Activated CD4-positive, alpha-beta memory T cell treated with anti-CD3 and anti-CD28 coated beads for 36 hours (primary cell): ENCODE measurements at regions of chr1 and their contacts with region 1.

Region 1: GRCh38 chr1:40668769-40669525 is 3.5 kb upstream of the RIMS3 start:
- DNase-seq: peak; percentile 91
- H3K4me3 Mint-ChIP-seq: peak overlapping the region; percentile 41
- H3K27ac Mint-ChIP-seq: no peak overlapping the region
- H3K4me1 Mint-ChIP-seq: peaks cover 7% of the 10 kb centered on the region
- H3K27me3 Mint-ChIP-seq: no peaks in the 10 kb centered on the region

Region 2: DNA sequence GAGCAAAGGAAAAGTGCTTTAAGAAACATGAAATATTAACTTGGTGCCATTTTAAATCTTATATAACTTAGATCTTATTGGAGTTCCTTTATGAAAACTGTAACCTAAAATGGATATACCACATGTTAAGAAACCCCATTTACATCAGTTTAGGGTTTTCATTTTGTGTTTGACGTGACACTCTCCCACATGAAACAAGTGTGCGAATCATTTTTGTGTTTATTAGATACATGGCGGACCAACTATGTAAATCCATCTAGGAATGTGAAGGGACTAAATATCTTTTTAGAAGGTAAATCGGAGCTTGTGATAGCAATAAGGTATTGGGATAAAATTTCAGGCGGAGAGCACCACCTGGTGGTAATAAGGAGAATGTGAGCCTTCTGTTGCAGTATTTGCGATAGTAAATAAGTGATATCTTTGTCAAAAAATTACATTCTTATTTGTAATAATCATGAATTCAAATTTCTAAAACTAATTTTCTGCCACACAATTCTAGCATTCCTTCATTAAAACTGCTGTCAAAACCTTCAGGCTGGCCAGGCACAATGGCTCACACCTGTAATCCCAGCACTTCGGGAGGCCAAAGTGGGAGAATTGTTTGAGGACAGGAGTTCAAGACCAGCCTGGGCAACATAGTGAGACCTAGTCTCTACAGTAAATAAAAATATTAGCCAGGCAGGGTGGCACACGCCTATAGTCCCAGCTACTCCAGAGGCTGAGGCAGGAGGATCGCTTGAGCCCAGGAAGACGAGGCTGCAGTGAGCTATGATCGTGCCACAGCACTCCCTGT is 264.1 kb before region 1 on chr1:
- CTCF ChIA-PET with region 1: no interaction called
- POLR2A ChIA-PET with region 1: no interaction called
- intact Hi-C with region 1: no loop called
- DNase-seq: peak; percentile 49
- H3K4me3 Mint-ChIP-seq: peak overlapping the region; percentile 52
- H3K27ac Mint-ChIP-seq: peak overlapping the region; percentile 88
- H3K4me1 Mint-ChIP-seq: peaks cover 72% of the 10 kb centered on the region
- H3K27me3 Mint-ChIP-seq: no peaks in the 10 kb centered on the region

Region 3: DNA sequence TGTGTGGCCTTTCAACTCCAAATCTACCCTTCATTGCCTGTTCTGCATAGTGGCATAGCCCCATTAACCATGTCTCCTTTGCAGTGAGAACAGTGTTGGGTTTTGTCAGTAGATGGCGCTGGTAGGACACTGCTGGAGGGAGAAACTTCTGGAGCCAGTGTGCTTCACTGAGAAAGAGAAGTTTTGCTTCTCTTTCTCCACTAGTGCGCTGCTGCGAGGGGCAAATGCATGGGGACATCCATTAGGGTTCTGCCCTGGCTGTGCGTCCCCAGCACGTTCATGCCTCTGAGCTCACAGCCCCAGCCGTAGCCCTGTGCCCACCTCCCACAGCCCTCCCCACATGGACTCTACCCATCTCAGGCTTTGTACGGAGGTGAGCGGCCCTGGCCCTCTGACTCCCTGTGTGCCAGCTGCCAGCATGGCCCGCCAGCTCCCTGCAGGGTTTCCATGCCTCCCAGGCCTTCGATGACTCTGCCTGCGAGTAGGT is 56.6 kb before region 1 on chr1:
- CTCF ChIA-PET with region 1: interaction called, 6 read pairs
- POLR2A ChIA-PET with region 1: no interaction called
- intact Hi-C with region 1: loop called (anchors 1 kb)
- DNase-seq: peak; percentile 79
- H3K4me3 Mint-ChIP-seq: no peak overlapping the region
- H3K27ac Mint-ChIP-seq: no peak overlapping the region
- H3K4me1 Mint-ChIP-seq: no peaks in the 10 kb centered on the region
- H3K27me3 Mint-ChIP-seq: no peaks in the 10 kb centered on the region

Region 4: GRCh38 chr1:40625066-40625465 is 43.9 kb before region 1 on chr1:
- CTCF ChIA-PET with region 1: interaction called, 5 read pairs
- POLR2A ChIA-PET with region 1: no interaction called
- intact Hi-C with region 1: loop called (anchors 2 kb)
- DNase-seq: peak; percentile 45
- H3K4me3 Mint-ChIP-seq: no peak overlapping the region
- H3K27ac Mint-ChIP-seq: no peak overlapping the region
- H3K4me1 Mint-ChIP-seq: peaks cover 18% of the 10 kb centered on the region
- H3K27me3 Mint-ChIP-seq: no peaks in the 10 kb centered on the region

Region 5: DNA sequence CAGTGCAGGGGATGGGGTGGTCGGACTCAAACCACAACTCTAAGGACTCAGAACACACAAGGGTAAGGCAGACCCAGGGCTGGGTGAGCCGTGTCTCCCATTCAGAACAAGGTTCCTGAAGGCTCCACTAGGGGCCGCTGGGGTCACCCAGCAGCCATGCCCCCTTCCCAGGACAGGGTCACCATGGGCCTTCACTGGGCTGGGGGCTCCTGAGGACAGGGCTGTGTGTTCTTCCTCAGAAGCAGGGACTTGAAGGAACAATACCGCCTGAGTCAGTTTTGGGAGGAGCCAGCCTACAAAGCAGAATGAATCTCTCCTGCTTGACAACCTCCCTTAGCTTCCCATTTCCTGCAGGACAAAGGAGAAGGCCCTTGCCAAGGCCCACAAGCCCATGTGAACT is 18.9 kb before region 1 on chr1:
- CTCF ChIA-PET with region 1: no interaction called
- POLR2A ChIA-PET with region 1: no interaction called
- intact Hi-C with region 1: no loop called
- DNase-seq: no peak
- H3K4me3 Mint-ChIP-seq: no peak overlapping the region
- H3K27ac Mint-ChIP-seq: no peak overlapping the region
- H3K4me1 Mint-ChIP-seq: no peaks in the 10 kb centered on the region
- H3K27me3 Mint-ChIP-seq: peaks cover 2% of the 10 kb centered on the region

Region 6: DNA sequence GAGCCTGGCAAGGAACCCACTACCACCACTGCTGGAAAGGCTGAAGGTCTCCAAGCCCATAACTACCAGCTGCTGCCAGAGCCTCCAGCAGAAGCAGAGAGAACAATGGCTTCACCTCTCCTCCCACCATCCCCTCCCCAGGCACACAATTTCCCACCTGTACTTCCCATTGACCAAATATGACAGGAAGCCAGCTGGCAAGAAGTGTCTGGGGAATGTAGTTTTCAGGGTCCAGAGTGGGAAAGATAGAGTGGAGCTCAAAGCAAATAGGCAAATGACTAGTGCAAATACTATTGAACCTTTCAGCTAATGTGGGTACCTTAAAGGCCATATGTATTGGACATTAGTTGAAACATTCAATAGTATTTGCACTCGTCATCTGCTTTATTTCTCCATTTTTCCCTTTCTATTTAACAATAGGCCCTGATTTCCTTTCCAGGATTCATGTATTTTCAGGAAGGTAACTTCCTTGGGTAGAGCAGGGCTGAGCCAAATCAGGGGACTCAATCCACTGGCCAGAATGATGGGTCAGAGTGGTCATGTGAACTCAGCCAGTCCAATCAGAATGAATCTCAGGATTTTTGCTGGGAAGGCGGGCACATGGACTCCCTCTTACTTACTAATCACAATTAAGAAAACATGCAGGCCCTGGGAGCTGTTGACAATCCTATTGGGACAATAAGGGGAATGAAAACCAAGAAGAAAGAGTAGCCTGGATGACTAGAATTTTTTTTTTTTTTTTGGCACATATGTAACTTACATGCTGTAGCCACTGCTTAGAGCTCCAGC is 10.4 kb after region 1 on chr1:
- CTCF ChIA-PET with region 1: interaction called, 15 read pairs
- POLR2A ChIA-PET with region 1: no interaction called
- intact Hi-C with region 1: no loop called
- DNase-seq: no peak
- H3K4me3 Mint-ChIP-seq: no peak overlapping the region
- H3K27ac Mint-ChIP-seq: no peak overlapping the region
- H3K4me1 Mint-ChIP-seq: no peaks in the 10 kb centered on the region
- H3K27me3 Mint-ChIP-seq: peaks cover 2% of the 10 kb centered on the region

Region 7: GRCh38 chr1:40840526-40841323 is 171.8 kb after region 1 on chr1:
- CTCF ChIA-PET with region 1: no interaction called
- POLR2A ChIA-PET with region 1: no interaction called
- intact Hi-C with region 1: no loop called
- DNase-seq: no peak
- H3K4me3 Mint-ChIP-seq: no peak overlapping the region
- H3K27ac Mint-ChIP-seq: no peak overlapping the region
- H3K4me1 Mint-ChIP-seq: peaks cover 15% of the 10 kb centered on the region
- H3K27me3 Mint-ChIP-seq: no peaks in the 10 kb centered on the region

Region 8: GRCh38 chr1:40939320-40940059 is 270.5 kb after region 1 on chr1:
- CTCF ChIA-PET with region 1: no interaction called
- POLR2A ChIA-PET with region 1: no interaction called
- intact Hi-C with region 1: no loop called
- DNase-seq: no peak
- H3K4me3 Mint-ChIP-seq: no peak overlapping the region
- H3K27ac Mint-ChIP-seq: no peak overlapping the region
- H3K4me1 Mint-ChIP-seq: no peaks in the 10 kb centered on the region
- H3K27me3 Mint-ChIP-seq: no peaks in the 10 kb centered on the region